Thyroid gland (tissue), 4 donors: ENCODE measurements at regions of chr16 and their contacts with region 1.

Region 1: DNA sequence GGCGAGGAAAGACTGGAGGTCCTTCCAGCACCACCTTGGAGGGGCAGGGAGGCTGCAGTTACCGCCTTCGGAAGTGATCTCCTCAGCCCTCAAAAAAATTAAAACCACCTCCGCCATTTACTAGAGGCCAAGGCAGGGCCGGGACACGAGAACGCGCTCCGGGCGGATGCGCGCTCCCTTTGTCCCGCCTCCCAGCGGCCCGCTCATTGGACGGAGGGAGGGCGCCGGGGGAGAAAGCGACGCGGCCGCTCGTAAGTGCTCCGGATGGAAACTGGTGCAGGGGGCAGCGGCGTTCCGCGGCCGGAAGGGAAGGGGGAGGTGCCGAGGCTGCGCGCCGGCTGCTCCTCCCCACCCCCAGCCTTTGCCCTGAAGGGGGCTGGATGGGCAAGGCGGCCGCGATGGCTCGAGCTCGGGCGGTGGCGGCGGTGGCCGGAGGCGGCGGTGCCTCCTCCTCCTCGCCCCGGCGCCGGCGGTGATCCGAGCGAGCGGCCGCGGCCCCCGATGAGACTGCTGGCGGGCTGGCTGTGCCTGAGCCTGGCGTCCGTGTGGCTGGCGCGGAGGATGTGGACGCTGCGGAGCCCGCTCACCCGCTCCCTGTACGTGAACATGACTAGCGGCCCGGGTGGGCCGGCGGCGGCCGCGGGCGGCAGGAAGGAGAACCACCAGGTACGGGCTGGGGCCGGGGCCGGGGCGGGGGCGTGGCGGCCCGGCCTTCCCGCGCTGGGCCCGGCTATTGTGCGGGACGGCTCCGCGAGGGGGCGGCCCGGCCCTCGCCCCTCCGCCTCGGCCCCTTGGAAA is at the start of gene METTL9:
- DNase-seq: peak; percentile 95 to 96
- H3K4me3 ChIP-seq: peak within 1 kb of the TSS; percentile 77 to 95 (median 94)
- H3K27ac ChIP-seq: peak within 1 kb of the TSS; percentile 85 to 98 (median 95)
- H3K4me1 ChIP-seq: peaks cover 11 to 31% of the 10 kb centered on the region in 2 donors
- H3K27me3 ChIP-seq: no peaks in the 10 kb centered on the region
- CTCF ChIP-seq: no peak
- POLR2A ChIP-seq: peak; percentile 64 to 93
- total RNA-seq, gene METTL9: 139 to 196 (median 181) TPM

Region 2: GRCh38 chr16:21638573-21638975 is 39.1 kb after region 1 on chr16:
- intact Hi-C with region 1: loop called (anchors 5 kb)
- DNase-seq: no peak
- H3K4me3 ChIP-seq: no peak overlapping the region
- H3K27ac ChIP-seq: no peak overlapping the region
- H3K4me1 ChIP-seq: no peaks in the 10 kb centered on the region
- H3K27me3 ChIP-seq: no peaks in the 10 kb centered on the region
- CTCF ChIP-seq: no peak
- POLR2A ChIP-seq: no peak